ENCODE measurements at regions of chr16 and their contacts with region 1.

Region 1: GRCh38 chr16:30445408-30446202 is at the start of gene SEPHS2:
- DNase-seq: peak; percentile 97
- H3K4me3 ChIP-seq: peak within 1 kb of the TSS; percentile 39 to 73 (median 43)
- H3K27ac ChIP-seq: peak within 1 kb of the TSS; percentile 70 to 85 (median 73)
- H3K4me1 ChIP-seq: peaks cover 11 to 16% of the 10 kb centered on the region in 2 donors
- H3K27me3 ChIP-seq: no peaks in the 10 kb centered on the region
- CTCF ChIP-seq: peak in 3 of 6 experiments; percentile 17 to 47 (median 18)
- POLR2A ChIP-seq: peak; percentile 51 to 98
- total RNA-seq, gene SEPHS2: 34.5 to 41.3 (median 39.9) TPM

Region 2: DNA sequence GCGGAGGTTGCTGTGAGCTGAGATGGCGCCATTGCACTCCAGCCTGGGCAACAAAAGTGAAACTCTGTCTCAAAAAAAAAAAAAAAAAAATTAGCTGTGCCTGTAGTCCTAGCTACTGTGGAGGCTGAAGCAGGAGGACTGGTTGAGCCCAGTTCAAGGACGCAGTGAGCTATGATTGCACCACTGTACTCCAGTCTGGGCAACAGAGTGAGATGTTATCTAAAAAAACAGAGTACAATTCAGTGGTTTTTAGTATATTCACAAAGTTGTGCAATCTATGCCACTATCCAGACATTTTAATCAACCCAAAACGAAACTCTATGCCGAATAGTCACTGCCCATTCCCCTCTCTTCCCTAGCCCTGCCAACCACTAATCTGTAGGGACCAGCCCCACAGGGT is 724.9 kb before region 1 on chr16:
- intact Hi-C with region 1: no loop called
- DNase-seq: no peak
- H3K4me3 ChIP-seq: no peak overlapping the region
- H3K27ac ChIP-seq: no peak overlapping the region
- H3K4me1 ChIP-seq: no peaks in the 10 kb centered on the region
- H3K27me3 ChIP-seq: no peaks in the 10 kb centered on the region
- CTCF ChIP-seq: no peak
- POLR2A ChIP-seq: no peak

Region 3: DNA sequence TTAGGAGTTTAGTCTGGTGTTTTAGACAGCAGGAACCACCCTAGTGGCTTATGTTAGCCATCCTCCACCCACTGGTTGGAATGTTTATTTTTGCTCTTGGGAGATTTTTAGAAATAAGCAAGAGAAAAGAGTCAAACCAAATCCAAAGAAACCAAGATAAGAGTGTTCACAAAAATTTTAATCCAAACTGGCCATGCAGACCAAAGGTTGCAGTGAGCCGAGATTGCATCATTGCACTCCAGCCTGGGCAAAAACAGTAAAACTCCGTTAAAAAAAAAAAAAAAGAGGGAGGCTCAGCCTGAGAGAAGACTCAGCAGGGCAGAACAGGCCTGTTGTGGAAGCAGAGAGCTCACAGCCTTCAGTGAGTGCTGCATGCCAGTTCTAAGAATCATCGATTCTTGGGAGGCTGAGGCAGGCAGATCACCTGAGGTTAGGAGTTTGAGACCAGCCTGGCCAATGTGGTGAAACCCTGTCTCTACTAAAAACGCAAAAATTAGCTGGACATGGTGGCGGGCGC is 687.6 kb before region 1 on chr16:
- intact Hi-C with region 1: no loop called
- DNase-seq: peak; percentile 74 to 77
- H3K4me3 ChIP-seq: no peak overlapping the region
- H3K27ac ChIP-seq: peak overlapping the region; percentile 69 to 78 (median 78)
- H3K4me1 ChIP-seq: peaks cover 37 to 47% of the 10 kb centered on the region in 2 donors
- H3K27me3 ChIP-seq: no peaks in the 10 kb centered on the region
- CTCF ChIP-seq: no peak
- POLR2A ChIP-seq: no peak

Region 4: DNA sequence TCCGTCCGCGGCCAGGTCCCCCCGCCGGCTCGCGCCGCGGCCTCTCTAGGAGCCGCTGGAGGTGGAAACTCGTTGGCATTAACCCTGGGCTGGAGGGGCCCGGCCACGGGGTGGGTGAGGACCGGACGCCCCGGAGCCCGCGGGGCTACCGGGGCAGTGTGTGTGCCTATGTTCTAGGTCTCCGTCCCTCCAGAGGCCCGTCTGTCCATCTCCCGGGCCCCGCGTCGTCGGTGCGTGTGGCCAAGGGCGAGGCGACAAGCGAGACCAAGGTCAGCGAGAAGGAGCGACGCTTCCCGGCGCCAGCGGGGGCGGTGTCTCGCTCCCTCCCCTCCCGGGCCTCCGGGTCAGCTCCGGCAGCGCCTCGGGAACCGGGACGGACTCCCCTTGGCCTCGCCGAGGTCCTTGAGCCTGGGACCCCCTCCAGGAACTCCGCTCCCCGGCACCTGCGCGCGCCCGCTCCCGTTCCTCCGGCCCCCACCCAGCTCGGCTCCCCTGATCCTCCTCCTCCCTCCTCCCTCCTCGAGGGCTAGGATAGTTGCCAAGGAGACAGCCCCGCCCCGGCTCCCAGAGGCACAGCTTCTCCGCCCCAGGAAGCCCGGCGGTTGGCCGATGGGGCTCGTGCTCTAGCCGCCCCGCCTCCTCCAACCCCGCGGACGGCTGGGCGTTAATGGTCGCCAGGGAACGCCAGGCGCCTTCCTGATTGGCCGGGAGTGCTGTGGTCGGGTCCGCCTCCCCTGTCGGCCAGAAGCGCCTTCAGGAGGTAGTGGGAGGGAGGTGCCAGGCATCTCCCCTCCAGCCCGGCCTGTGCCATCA is 81.4 kb after region 1 on chr16:
- intact Hi-C with region 1: loop called (anchors 2 kb)
- DNase-seq: peak; percentile 99
- H3K4me3 ChIP-seq: peak overlapping the region; percentile 49 to 74 (median 65)
- H3K27ac ChIP-seq: peak overlapping the region; percentile 95 to 100 (median 98)
- H3K4me1 ChIP-seq: peaks cover 8 to 21% of the 10 kb centered on the region in 2 donors
- H3K27me3 ChIP-seq: no peaks in the 10 kb centered on the region
- CTCF ChIP-seq: peak in 4 of 6 experiments; percentile 25 to 44 (median 29)
- POLR2A ChIP-seq: peak in 1 of 2 donors; percentile 82

Region 5: GRCh38 chr16:30609926-30610839 is 164.6 kb after region 1 on chr16 and contains the start of gene ZNF689:
- intact Hi-C with region 1: loop called (anchors 10 kb)
- DNase-seq: peak; percentile 95 to 96
- H3K4me3 ChIP-seq: peak within 1 kb of the TSS; percentile 56 to 89 (median 85)
- H3K27ac ChIP-seq: peak within 1 kb of the TSS; percentile 83 to 96 (median 92)
- H3K4me1 ChIP-seq: peaks cover 0 to 9% of the 10 kb centered on the region in 2 donors
- H3K27me3 ChIP-seq: no peaks in the 10 kb centered on the region
- CTCF ChIP-seq: no peak
- POLR2A ChIP-seq: peak in 1 of 2 donors; percentile 73
- total RNA-seq, gene ZNF689: 9.7 to 14.7 (median 11.8) TPM

Region 6: GRCh38 chr16:30692381-30693064 is 246.9 kb after region 1 on chr16:
- intact Hi-C with region 1: no loop called
- DNase-seq: no peak
- H3K4me3 ChIP-seq: no peak overlapping the region
- H3K27ac ChIP-seq: no peak overlapping the region
- H3K4me1 ChIP-seq: peaks cover 9 to 16% of the 10 kb centered on the region in 2 donors
- H3K27me3 ChIP-seq: no peaks in the 10 kb centered on the region
- CTCF ChIP-seq: no peak
- POLR2A ChIP-seq: no peak

Measured in thyroid gland (tissue), 4 donors.